CD4-positive, alpha-beta memory T cell (primary cell): ENCODE measurements at regions of chr22 and their contacts with region 1.

Region 1: GRCh38 chr22:20238536-20238900 is 29.6 kb downstream of the RTN4R start:
- DNase-seq: peak; percentile 40 to 57 (median 43)
- H3K4me3 ChIP-seq: no peak overlapping the region
- H3K4me3 Mint-ChIP-seq: peak overlapping the region in 4 of 8 donors; percentile 33 to 56 (median 44)
- H3K27ac ChIP-seq: peak overlapping the region; percentile 43
- H3K27ac Mint-ChIP-seq: peak overlapping the region in 6 of 7 donors; percentile 10 to 81 (median 54)
- H3K4me1 ChIP-seq: peaks cover 67% of the 10 kb centered on the region
- H3K4me1 Mint-ChIP-seq: peaks cover 6 to 37% (median 21%) of the 10 kb centered on the region in 4 donors
- H3K27me3 ChIP-seq: no peaks in the 10 kb centered on the region
- H3K27me3 Mint-ChIP-seq: no peaks in the 10 kb centered on the region

Region 2: DNA sequence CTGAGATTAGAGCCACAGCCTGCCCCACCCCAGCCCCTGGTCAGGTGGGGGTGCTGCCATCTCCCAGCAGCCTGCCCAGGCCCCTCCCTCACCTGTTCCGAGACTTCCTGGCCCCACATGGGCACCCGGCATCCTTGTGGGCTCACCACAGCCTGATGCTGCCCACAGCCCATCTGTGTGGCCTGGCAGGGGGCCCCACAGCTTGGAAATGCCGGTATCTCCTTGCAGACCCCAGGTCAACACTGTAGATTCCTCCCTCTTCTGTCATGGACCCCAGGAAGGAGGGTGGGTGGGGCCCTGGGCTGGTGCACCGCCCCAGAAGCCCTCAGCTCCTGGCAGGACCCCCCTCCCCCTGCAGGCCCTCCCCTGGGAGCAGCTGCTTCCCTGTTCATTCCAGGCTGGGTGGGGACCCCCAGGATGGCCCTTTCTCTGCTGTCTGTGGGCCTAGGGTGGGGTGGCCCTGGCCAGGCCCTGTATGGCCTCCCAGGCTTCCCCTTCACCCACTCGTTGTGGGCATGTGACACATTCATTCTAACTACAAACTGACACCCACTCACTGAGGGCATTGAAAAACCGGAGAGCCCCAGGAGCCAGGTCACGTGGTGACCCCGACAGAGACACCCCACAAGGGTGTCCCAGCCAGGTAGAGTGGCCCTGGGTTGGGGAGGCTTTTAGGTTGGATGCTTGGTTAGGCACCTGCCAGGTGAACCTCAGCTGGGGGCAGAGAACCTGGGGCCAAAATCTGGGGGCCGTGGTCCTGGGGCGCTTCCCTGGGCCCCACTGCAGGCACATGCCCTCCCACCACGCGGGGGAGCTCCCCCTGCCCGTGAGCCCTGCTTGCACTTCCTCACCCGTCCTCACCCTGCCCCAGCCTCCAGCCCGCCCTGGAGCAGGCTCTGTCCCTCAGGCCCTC is 43.6 kb before region 1 on chr22:
- CTCF ChIA-PET with region 1: no interaction called
- POLR2A ChIA-PET with region 1: no interaction called
- intact Hi-C with region 1: no loop called
- DNase-seq: no peak
- H3K4me3 ChIP-seq: no peak overlapping the region
- H3K4me3 Mint-ChIP-seq: no peak overlapping the region
- H3K27ac ChIP-seq: no peak overlapping the region
- H3K27ac Mint-ChIP-seq: no peak overlapping the region
- H3K4me1 ChIP-seq: no peaks in the 10 kb centered on the region
- H3K4me1 Mint-ChIP-seq: no peaks in the 10 kb centered on the region
- H3K27me3 ChIP-seq: no peaks in the 10 kb centered on the region
- H3K27me3 Mint-ChIP-seq: no peaks in the 10 kb centered on the region

Region 3: GRCh38 chr22:20205964-20206708 is 32.4 kb before region 1 on chr22:
- CTCF ChIA-PET with region 1: interaction called, 9 read pairs
- POLR2A ChIA-PET with region 1: interaction called, 23 read pairs
- intact Hi-C with region 1: loop called (anchors 1 kb)
- DNase-seq: peak; percentile 58 to 71 (median 67)
- H3K4me3 ChIP-seq: peak overlapping the region; percentile 78 to 96
- H3K4me3 Mint-ChIP-seq: peak overlapping the region; percentile 91 to 97 (median 96)
- H3K27ac ChIP-seq: peak overlapping the region; percentile 74
- H3K27ac Mint-ChIP-seq: peak overlapping the region; percentile 59 to 97 (median 95)
- H3K4me1 ChIP-seq: peaks cover 29% of the 10 kb centered on the region
- H3K4me1 Mint-ChIP-seq: peaks cover 13 to 36% (median 23%) of the 10 kb centered on the region in 4 donors
- H3K27me3 ChIP-seq: peaks cover 3% of the 10 kb centered on the region
- H3K27me3 Mint-ChIP-seq: peaks cover 0 to 1% of the 10 kb centered on the region in 2 donors

Region 4: GRCh38 chr22:20268279-20269012 is 29.9 kb after region 1 on chr22 and contains the start of gene RTN4R:
- CTCF ChIA-PET with region 1: no interaction called
- POLR2A ChIA-PET with region 1: no interaction called
- intact Hi-C with region 1: loop called (anchors 1 kb)
- DNase-seq: peak; percentile 38 to 59 (median 46)
- H3K4me3 ChIP-seq: no peak within 1 kb of the TSS
- H3K4me3 Mint-ChIP-seq: peak within 1 kb of the TSS; percentile 68 to 84 (median 78)
- H3K27ac ChIP-seq: no peak within 1 kb of the TSS
- H3K27ac Mint-ChIP-seq: peak within 1 kb of the TSS in 3 of 7 donors; percentile 46 to 77 (median 74)
- H3K4me1 ChIP-seq: peaks cover 8% of the 10 kb centered on the region
- H3K4me1 Mint-ChIP-seq: peaks cover 0 to 12% (median 6%) of the 10 kb centered on the region in 4 donors
- H3K27me3 ChIP-seq: no peaks in the 10 kb centered on the region
- H3K27me3 Mint-ChIP-seq: peaks cover 0 to 1% of the 10 kb centered on the region in 2 donors
- total RNA-seq, gene RTN4R: 2.1 to 2.7 TPM